ENCODE measurements at regions of chrX and their contacts with region 1.

Region 1: GRCh38 chrX:130339408-130340222 is at the start of gene SLC25A14:
- DNase-seq: peak; percentile 67
- H3K4me3 ChIP-seq: peak within 1 kb of the TSS; percentile 53 to 90 (median 69)
- H3K27ac ChIP-seq: peak within 1 kb of the TSS; percentile 42
- H3K4me1 ChIP-seq: no peaks in the 10 kb centered on the region
- H3K27me3 ChIP-seq: no peaks in the 10 kb centered on the region
- CTCF ChIP-seq: no peak
- POLR2A ChIP-seq: no peak
- total RNA-seq, gene SLC25A14: 10.6 and 14.5 TPM in 2 replicates

Region 2: GRCh38 chrX:130120746-130121504 is 218.7 kb before region 1 on chrX:
- CTCF ChIA-PET with region 1: no interaction called
- POLR2A ChIA-PET with region 1: no interaction called
- dilution Hi-C with region 1: no loop called
- intact Hi-C with region 1: no loop called
- DNase-seq: peak; percentile 75
- H3K4me3 ChIP-seq: peak overlapping the region in 1 of 3 experiments; percentile 30
- H3K27ac ChIP-seq: peak overlapping the region; percentile 82
- H3K4me1 ChIP-seq: peaks cover 40% of the 10 kb centered on the region
- H3K27me3 ChIP-seq: no peaks in the 10 kb centered on the region
- CTCF ChIP-seq: peak; percentile 57 to 62
- POLR2A ChIP-seq: peak; percentile 41

Region 3: DNA sequence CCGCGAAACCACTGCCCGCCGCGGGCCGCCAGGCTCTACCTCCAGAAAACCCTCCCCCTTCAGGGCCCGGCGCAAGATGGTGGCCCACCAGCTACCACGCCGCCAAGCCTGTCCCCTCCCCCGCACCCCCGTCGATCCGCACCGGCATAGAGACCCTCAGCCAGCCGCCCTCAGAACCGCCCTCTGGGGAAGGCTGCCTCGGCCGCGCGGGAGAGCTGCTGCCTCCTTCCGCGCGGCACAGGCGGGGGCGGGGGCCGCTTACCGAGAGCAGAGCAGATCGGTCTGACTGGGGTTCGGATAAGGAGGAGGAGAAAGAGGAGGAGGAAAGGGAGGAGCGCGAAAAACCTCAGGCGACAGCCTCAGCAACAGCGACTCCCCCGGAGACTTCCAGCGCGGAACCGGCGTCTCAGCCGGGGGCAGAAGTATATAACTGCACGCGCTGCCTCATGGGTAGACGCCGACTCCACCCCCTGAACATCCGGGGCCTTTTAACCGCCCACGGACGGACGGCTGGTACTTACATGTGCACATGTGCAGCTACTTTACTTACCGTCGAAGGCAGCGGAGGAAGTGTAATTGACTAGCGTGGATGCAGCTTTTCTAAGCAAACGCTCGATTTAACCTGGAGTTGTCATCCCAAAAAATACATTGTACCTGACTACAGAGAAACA is 71.0 kb before region 1 on chrX and contains the start of gene ZNF280C:
- CTCF ChIA-PET with region 1: no interaction called
- POLR2A ChIA-PET with region 1: no interaction called
- dilution Hi-C with region 1: no loop called
- intact Hi-C with region 1: loop called (anchors 2 kb)
- DNase-seq: peak; percentile 91
- H3K4me3 ChIP-seq: peak within 1 kb of the TSS; percentile 63 to 92 (median 74)
- H3K27ac ChIP-seq: peak within 1 kb of the TSS; percentile 38
- H3K4me1 ChIP-seq: peaks cover 6% of the 10 kb centered on the region
- H3K27me3 ChIP-seq: no peaks in the 10 kb centered on the region
- CTCF ChIP-seq: peak; percentile 21 to 38
- POLR2A ChIP-seq: peak; percentile 95
- total RNA-seq, gene ZNF280C: 7.3 and 7.7 TPM in 2 replicates

Region 4: DNA sequence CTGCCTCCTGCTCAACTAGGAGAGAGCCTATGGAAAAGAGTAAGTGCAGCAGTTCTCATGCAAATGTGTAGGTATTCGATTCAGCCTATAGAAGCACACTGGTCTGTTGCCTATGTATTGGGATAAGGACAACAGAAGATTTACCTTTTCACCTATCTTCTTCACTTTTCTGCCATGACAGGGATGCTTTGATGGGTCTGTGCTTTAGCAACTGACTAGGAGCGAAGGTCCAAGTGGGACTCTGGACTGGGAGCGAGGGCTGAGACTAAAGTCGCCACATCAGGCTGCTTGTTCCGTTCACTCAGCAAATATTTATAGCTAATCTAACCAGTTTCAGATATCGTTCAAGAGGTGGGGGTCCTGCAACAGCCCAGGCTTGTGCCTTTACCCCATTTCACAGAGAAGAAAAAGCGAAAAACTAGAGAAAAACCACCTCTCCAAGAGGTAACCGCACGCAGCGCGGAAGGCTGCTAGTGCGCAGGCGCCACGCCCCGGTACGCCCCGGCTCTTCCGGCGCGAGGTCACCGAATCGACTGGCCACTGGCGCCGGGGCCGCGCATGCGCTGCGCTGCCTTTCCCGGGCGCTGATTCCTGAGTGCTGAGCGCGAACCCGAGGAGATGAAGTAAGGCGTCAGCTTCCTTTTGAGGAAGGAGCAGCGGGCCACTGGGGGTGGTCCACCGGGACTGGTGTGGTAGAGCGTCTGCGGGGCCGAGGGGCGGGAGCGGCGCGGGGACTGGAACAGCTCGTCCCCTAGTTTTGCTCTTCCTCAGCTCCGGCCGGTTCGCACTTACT is 62.0 kb after region 1 on chrX and contains the start of gene RBMX2:
- CTCF ChIA-PET with region 1: no interaction called
- POLR2A ChIA-PET with region 1: no interaction called
- dilution Hi-C with region 1: no loop called
- intact Hi-C with region 1: loop called (anchors 5 kb)
- DNase-seq: peak; percentile 78
- H3K4me3 ChIP-seq: peak within 1 kb of the TSS; percentile 66 to 98 (median 95)
- H3K27ac ChIP-seq: peak within 1 kb of the TSS; percentile 55
- H3K4me1 ChIP-seq: peaks cover 10% of the 10 kb centered on the region
- H3K27me3 ChIP-seq: no peaks in the 10 kb centered on the region
- CTCF ChIP-seq: no peak
- POLR2A ChIP-seq: peak; percentile 79
- total RNA-seq, gene RBMX2: 21.1 and 21.9 TPM in 2 replicates

Region 5: GRCh38 chrX:130623508-130623907 is 283.9 kb after region 1 on chrX:
- CTCF ChIA-PET with region 1: no interaction called
- POLR2A ChIA-PET with region 1: no interaction called
- dilution Hi-C with region 1: no loop called
- intact Hi-C with region 1: no loop called
- DNase-seq: no peak
- H3K4me3 ChIP-seq: no peak overlapping the region
- H3K27ac ChIP-seq: no peak overlapping the region
- H3K4me1 ChIP-seq: no peaks in the 10 kb centered on the region
- H3K27me3 ChIP-seq: no peaks in the 10 kb centered on the region
- CTCF ChIP-seq: no peak
- POLR2A ChIP-seq: no peak

Region 6: DNA sequence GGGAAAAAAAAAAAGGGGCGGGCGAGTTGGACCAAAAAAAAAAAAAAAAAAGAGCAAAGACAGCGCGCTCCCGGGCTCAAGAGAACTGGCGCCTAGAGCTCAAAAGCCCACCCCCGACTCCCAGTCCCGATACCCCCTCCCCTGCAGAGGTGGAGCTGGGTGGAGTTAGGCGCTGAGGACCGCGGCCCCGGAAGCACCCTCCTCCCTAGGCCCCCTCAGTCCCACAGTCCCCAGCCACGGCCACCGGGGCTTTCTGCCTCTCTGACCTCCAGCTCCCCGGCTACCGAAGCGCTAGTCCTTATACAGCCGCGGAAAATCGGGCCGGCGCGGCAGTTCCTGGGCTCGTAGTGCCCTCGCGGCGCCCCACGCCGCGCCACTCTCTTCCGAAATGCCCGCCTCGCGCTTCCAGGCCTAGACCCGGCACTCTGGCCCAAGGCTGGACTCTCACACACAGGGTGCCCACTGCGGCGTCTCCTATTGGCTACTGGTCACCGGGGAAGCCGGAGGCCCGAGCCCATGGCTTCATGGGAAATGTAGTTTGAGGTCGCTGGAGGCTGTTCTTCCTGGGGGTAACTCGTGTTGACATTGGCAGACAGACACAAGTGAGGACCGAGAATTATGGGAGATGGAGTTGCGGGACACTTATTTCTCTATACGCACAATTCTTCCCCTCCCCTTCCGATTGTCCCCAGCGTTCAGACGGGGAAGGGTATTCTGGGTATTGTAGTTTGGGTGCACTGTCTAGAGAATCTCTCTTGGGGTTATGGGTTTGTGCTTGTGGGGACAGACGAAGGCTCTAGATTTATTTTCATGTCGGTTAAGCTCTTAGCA is 563.4 kb after region 1 on chrX and contains the start of gene ENOX2:
- CTCF ChIA-PET with region 1: no interaction called
- POLR2A ChIA-PET with region 1: no interaction called
- dilution Hi-C with region 1: no loop called
- intact Hi-C with region 1: loop called (anchors 1 kb)
- DNase-seq: peak; percentile 95
- H3K4me3 ChIP-seq: peak within 1 kb of the TSS; percentile 47 to 87 (median 68)
- H3K27ac ChIP-seq: peak within 1 kb of the TSS; percentile 46
- H3K4me1 ChIP-seq: peaks cover 2% of the 10 kb centered on the region
- H3K27me3 ChIP-seq: peaks cover 0 to 4% of the 10 kb centered on the region in 2 experiments
- CTCF ChIP-seq: no peak
- POLR2A ChIP-seq: peak; percentile 73
- total RNA-seq, gene ENOX2: 12.2 and 13.1 TPM in 2 replicates

Measured in endothelial cell of umbilical vein (primary cell).